ENCODE measurements at regions of chr18 and their contacts with region 1.

Region 1: DNA sequence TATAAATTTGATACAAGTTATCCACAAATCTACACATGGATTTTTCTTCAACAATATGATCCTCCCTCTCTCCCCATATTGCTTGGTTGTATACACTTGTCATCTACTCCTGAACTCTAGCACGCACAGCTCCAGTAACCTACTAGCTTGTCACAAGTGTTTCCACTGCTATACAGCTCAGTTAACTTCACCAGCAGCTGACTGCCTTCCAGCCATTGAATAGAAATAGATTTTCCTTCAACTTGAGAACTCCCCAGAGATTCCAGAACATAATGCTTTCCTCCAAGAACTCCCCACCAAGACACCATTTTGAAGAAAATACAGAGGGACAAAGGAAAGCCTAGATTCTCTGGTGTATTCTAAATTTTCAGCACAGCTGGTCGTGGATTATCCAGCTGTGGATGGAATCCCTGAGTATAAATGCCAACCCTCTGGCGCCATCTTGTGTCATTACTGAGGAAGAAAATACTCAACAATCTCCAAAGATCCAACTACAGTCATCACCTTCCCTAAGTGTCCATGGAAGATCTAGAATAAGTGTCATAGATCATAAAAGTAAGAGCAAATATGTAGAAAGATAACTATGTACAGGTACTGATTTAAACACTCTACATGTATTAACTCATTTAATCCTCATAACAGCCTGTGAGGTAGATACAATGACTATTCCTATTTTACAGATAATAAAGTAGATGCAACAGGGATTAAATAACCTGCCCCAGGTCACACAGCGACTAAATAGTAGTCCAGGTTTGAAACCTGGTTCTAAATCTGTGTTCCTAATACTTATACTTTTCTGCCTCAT is 156.7 kb downstream of the ARHGAP28 start:
- DNase-seq: peak in 1 of 2 experiments; percentile 68
- H3K4me3 ChIP-seq: no peak overlapping the region
- H3K4me3 Mint-ChIP-seq: no peak overlapping the region
- H3K27ac Mint-ChIP-seq: no peak overlapping the region
- H3K4me1 ChIP-seq: no peaks in the 10 kb centered on the region
- H3K4me1 Mint-ChIP-seq: no peaks in the 10 kb centered on the region
- H3K27me3 ChIP-seq: no peaks in the 10 kb centered on the region
- H3K27me3 Mint-ChIP-seq: no peaks in the 10 kb centered on the region
- CTCF ChIP-seq: peak; percentile 67 to 78

Region 2: GRCh38 chr18:6543330-6543908 is 342.8 kb before region 1 on chr18:
- CTCF ChIA-PET with region 1: interaction called, 17 read pairs
- POLR2A ChIA-PET with region 1: no interaction called
- intact Hi-C with region 1: loop called (anchors 1 kb)
- DNase-seq: peak in 1 of 2 experiments; percentile 35
- H3K4me3 ChIP-seq: no peak overlapping the region
- H3K4me3 Mint-ChIP-seq: no peak overlapping the region
- H3K27ac Mint-ChIP-seq: no peak overlapping the region
- H3K4me1 ChIP-seq: peaks cover 7% of the 10 kb centered on the region
- H3K4me1 Mint-ChIP-seq: peaks cover 7% of the 10 kb centered on the region
- H3K27me3 ChIP-seq: no peaks in the 10 kb centered on the region
- H3K27me3 Mint-ChIP-seq: no peaks in the 10 kb centered on the region
- CTCF ChIP-seq: peak; percentile 64 to 65

Region 3: DNA sequence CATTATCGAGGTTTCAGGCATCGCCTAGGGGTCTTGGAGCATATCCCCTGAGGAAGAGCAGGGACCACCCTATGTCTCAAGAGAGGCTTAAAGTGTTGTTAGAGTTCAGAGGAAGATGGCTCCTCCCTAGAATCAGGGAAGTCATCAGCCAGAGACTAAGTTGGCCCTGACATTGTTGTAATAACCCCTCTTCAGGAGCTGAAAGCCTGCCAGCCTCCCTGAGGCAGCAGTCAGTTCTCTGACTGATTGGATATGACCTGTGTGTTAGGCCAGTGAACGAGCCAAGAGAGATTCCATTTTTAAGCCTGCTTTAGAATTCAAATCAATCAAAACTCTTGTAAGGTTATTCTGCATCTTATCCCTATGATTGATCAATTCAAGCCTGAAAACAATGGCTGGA is 121.8 kb before region 1 on chr18:
- CTCF ChIA-PET with region 1: no interaction called
- POLR2A ChIA-PET with region 1: no interaction called
- intact Hi-C with region 1: loop called (anchors 10 kb)
- DNase-seq: no peak
- H3K4me3 ChIP-seq: no peak overlapping the region
- H3K4me3 Mint-ChIP-seq: no peak overlapping the region
- H3K27ac Mint-ChIP-seq: no peak overlapping the region
- H3K4me1 ChIP-seq: peaks cover 28% of the 10 kb centered on the region
- H3K4me1 Mint-ChIP-seq: peaks cover 48% of the 10 kb centered on the region
- H3K27me3 ChIP-seq: no peaks in the 10 kb centered on the region
- H3K27me3 Mint-ChIP-seq: no peaks in the 10 kb centered on the region
- CTCF ChIP-seq: no peak

Region 4: DNA sequence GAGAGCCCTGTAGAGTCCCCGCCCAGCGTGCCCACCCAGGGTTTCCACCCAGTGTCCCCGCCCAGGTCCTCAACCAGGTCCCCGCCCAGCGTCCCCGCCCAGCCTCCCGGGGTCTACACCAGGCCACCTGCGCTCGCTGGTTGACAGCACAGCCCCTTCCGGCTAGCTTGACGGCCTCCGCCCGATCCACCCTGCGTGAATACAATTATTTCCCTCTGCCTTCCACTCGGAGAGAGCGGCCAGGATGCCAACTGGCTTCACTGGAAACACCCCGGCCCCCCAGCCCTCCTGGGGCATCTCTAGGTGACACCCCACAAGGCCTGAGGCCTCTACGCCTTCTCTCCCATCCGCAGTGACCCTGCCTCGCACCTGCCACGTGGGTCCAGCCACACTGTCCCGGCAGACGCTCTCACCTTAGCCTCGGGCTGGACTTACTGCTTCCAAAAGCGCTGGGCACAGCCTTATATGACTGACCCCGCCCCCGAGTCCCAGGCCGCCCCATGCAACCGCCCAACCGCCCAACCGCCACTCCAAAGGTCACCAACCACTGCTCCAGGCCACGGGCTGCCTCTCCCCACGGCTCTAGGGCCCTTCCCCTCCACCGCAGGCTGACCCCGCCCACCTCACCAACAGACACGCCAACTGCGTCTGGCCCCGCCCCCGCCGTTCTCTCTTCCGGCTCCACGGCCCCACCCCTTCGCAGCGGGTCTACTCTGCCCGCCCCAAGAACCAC is 43.3 kb after region 1 on chr18:
- CTCF ChIA-PET with region 1: no interaction called
- POLR2A ChIA-PET with region 1: no interaction called
- intact Hi-C with region 1: loop called (anchors 1 kb)
- DNase-seq: peak; percentile 98
- H3K4me3 ChIP-seq: peak overlapping the region; percentile 55
- H3K4me3 Mint-ChIP-seq: peak overlapping the region; percentile 90
- H3K27ac Mint-ChIP-seq: peak overlapping the region; percentile 66
- H3K4me1 ChIP-seq: peaks cover 43% of the 10 kb centered on the region
- H3K4me1 Mint-ChIP-seq: peaks cover 31% of the 10 kb centered on the region
- H3K27me3 ChIP-seq: no peaks in the 10 kb centered on the region
- H3K27me3 Mint-ChIP-seq: no peaks in the 10 kb centered on the region
- CTCF ChIP-seq: no peak

Region 5: GRCh38 chr18:6948281-6949055 is 62.3 kb after region 1 on chr18:
- CTCF ChIA-PET with region 1: no interaction called
- POLR2A ChIA-PET with region 1: no interaction called
- intact Hi-C with region 1: no loop called
- DNase-seq: no peak
- H3K4me3 ChIP-seq: no peak overlapping the region
- H3K4me3 Mint-ChIP-seq: no peak overlapping the region
- H3K27ac Mint-ChIP-seq: no peak overlapping the region
- H3K4me1 ChIP-seq: peaks cover 16% of the 10 kb centered on the region
- H3K4me1 Mint-ChIP-seq: peaks cover 25% of the 10 kb centered on the region
- H3K27me3 ChIP-seq: no peaks in the 10 kb centered on the region
- H3K27me3 Mint-ChIP-seq: no peaks in the 10 kb centered on the region
- CTCF ChIP-seq: no peak

Measured in Caco-2 (cell line).